Cardiac septum (tissue), 1 donor: ENCODE measurements at regions of chr6 and their contacts with region 1.

Region 1: DNA sequence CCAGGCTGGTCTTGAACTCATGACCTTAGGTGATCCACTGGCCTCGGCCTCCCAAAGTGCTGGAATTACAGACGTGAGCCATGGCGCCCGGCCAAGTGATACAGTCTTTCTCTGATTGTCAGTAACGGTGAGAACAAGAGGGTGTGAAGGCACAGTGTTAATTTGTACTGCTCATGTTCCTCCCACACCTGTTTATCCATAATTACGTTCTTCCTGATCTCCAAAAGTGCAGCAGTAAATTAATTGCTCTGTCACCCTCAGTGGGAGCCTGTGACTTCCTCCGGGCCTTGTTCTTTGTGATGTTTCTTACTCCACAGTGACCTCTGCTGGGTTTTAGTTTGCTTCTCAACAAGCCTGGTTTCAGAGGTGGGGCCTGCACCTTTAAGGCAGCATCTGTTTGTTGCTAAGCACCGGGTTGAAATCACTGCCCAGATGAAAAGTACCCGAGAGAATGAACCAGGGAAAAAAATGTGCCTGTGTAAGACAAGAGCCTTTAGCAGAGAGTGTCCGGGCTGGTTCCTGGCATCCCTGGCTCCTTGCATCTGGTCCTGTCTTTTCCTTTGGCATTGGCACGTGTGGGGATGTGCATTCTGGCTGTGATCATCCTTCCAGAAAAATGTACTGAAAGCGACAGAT is 89.1 kb upstream of the CLDN20 start:
- DNase-seq: no peak

Region 2: DNA sequence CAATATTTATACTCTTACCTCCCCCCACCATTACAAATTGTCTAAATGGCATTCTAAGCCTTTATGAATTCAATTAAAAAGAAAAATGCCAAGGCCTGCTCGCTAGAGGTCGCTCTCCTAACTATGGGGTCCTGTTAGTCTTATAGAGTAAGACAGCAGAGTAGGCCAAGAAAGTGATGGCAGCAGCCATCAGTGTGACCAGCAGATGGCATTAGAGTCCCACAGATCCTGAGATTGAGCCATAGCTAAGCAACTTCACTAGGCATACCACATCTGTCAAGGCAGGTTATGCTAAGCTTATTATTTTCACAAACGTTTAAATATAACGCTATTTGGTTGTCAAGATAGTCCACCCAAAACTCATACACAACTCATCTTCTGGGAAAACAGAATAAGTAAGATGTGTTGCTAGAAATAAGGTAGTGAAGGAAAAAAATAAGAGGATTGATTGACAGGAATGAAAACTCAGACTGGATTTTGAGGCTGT is 499.0 kb before region 1 on chr6:
- intact Hi-C with region 1: loop called (anchors 5 kb)
- DNase-seq: peak; percentile 90

Region 3: GRCh38 chr6:154868143-154868594 is 306.5 kb before region 1 on chr6:
- intact Hi-C with region 1: loop called (anchors 5 kb)
- DNase-seq: no peak

Region 4: GRCh38 chr6:154928325-154928922 is 246.3 kb before region 1 on chr6:
- intact Hi-C with region 1: loop called (anchors 1 kb)
- DNase-seq: no peak

Region 5: DNA sequence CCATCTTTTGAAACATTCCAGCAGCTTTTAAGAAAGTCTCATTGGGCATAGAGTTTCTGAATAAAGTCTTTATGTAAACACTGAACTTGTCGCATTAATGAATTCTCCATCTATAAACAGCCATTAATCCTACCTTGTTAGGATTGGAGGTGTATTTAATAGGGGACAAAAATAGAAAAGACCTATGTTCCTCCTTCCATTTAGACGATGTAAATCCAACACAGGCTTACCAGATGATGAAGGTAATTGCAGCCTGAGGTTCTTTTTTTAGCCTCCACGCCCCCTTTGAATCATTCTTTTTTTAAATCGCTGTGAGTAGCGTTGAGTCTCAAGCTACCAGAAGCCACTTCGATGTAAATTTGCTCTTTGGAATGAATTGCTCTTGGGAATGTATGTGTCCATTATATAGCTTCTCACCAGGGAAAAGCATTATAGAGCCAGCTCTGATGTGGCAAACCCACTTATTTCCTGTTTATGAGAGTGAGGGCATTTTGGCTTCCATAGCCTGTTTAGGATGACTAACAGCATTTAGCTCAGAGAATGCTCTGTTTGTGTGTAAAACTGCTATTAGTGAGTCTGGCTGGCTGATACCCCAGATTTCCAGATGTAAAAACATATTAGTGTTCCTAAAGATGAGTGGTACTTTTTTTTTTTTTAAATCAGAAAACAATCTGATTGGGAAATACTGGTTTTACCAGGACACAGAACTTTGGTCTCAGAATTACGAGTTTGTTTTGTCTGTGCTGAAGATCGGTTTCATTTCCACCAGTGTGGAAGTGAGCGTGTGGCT is 14.2 kb after region 1 on chr6:
- intact Hi-C with region 1: no loop called
- DNase-seq: no peak

Region 6: GRCh38 chr6:155248008-155249001 is 73.6 kb after region 1 on chr6:
- intact Hi-C with region 1: loop called (anchors 5 kb)
- DNase-seq: no peak

Region 7: GRCh38 chr6:155314092-155314772 is 139.5 kb after region 1 on chr6 and contains the start of gene TFB1M:
- intact Hi-C with region 1: loop called (anchors 5 kb)
- DNase-seq: peak; percentile 98
- total RNA-seq, gene TFB1M: 15.1 TPM